ENCODE measurements at regions of chr5 and their contacts with region 1.

Region 1: GRCh38 chr5:522899-523440 is 1.3 kb downstream of the SLC9A3 start:
- DNase-seq: no peak
- H3K4me3 ChIP-seq: no peak overlapping the region
- H3K27ac ChIP-seq: no peak overlapping the region
- H3K4me1 ChIP-seq: no peaks in the 10 kb centered on the region
- H3K27me3 ChIP-seq: peaks cover 91% of the 10 kb centered on the region
- CTCF ChIP-seq: no peak

Region 2: DNA sequence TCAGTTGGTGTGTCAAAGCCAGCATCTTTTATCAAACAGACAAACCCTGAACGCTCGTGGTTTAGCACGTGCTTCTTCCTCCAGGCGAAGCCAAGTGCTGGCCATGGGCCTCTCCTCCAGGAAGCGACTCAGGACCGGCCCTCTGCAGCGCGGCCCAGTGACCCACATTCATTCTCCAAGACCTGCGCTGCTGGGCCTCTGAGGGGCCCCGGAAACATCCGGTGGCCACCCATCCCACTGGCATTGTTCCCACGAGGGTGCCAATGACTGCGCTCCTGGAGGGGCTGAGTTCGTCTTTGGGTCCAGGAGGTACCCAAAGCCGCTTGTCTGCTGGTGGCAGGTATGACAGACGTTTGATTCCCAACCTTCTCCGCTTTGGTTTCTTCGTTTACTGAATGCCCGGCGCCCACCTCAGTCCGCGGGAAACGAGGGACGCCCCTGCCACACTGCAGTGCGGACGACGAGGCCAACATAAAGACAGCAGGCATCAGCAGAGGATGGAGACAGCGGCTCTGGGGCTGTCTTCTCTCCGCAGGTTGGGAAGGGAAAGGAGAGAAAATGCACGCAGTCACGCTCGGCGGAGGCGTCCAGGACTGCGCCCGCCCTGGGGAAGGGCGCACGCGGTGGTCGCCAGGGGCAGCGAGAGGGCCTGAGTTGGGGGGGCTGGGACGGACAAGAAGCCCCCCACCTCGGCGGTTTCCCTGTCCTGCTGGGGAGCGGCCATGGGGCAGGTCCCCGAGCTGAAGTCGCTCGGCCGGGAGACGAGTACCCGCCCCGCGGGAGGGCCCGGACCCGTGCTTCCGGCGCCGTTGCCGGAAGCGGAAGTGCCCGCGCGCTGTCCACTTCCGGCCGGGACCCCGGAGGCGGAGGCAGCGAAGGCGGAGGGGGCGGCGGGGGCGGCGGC is 80.4 kb before region 1 on chr5 and contains the start of gene EXOC3:
- CTCF ChIA-PET with region 1: interaction called, 13 read pairs
- POLR2A ChIA-PET with region 1: no interaction called
- intact Hi-C with region 1: no loop called
- DNase-seq: peak; percentile 71 to 92
- H3K4me3 ChIP-seq: peak within 1 kb of the TSS; percentile 99
- H3K27ac ChIP-seq: peak within 1 kb of the TSS; percentile 25
- H3K4me1 ChIP-seq: peaks cover 24% of the 10 kb centered on the region
- H3K27me3 ChIP-seq: no peaks in the 10 kb centered on the region
- CTCF ChIP-seq: no peak
- total RNA-seq, gene EXOC3: 155 and 188 TPM in 2 replicates

Region 3: DNA sequence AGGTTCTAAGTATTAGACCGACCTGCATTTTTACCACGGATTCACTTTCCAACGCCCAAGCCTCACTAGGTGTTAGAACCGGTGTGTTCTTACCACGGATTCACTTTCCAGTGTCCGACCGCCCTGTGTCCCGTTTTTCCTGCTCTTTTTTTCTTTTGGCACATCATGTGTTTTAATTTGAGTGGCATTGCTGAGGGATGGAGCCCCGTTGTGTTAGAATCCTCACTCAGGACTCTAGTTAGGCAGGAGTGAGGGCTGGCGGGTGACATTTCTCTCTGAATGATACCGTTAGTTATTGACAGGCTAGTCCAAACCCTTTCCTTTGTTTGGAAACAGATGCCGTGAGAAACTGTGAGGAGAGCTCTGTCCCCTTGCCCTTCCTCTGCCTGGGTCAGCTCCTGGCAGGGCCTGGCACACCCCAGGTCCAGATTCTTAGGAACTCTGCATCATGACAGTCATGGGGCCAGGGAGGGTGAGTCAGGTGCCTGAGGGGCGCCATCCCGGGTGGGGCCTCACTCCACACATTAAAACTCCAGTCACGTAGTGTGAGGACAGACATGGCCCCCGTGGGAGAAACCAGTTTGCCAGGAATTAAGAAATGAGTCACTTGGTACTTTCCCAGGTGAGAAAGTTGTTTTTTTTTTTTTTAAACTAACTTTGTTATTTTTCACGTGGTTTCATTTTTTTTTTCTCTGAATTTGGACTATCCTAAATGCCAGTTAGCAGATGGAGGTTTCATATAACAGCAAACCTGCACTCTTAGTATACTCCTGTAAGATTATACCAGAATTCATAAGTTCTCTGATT is 64.2 kb before region 1 on chr5:
- CTCF ChIA-PET with region 1: no interaction called
- POLR2A ChIA-PET with region 1: no interaction called
- intact Hi-C with region 1: no loop called
- DNase-seq: peak; percentile 99
- H3K4me3 ChIP-seq: no peak overlapping the region; the same call in 1 of the 2 replicates
- H3K27ac ChIP-seq: peak overlapping the region; percentile 79
- H3K4me1 ChIP-seq: peaks cover 23% of the 10 kb centered on the region
- H3K27me3 ChIP-seq: no peaks in the 10 kb centered on the region
- CTCF ChIP-seq: 0 out of 2 replicates have a peak, but pooled peaks have one; percentile 14

Region 4: DNA sequence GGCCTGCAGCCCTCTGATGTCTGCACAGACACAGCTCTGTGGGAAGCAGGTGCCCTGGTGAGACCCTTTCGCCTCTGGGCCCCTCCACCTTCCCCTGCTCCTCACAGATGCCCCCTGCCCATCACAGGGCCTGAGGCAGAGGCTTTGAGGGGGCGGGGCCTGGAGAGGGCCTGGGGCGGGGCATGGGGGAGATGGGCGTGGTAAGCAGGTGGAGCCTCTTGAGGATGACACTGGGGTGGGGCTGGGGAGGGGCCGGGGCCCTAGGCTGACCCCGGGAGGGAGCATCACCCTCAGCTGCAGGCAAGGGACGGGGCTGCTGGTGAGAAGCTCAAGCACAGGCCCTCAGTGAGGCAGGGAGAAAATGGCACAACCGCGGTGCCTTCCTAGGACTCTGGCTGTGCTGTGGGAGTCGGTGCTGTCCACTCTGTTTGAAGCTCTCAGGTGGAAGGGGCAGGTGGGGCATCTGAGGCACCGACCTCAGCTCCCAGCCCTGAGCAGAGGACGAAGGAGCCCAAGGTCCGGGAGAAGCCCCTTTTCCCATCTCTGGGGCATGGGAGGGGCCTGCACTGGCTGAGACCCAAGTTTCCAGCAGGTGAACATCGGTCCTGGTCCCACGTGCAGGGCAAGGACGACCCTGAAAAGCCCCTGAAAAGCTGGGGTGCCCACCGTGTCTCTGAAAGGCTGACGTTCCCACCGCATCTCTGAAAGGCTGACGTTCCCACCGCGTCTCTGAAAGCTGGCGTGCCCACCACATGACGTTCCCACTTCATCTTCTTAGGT is 18.8 kb after region 1 on chr5:
- CTCF ChIA-PET with region 1: interaction called, 13 read pairs
- POLR2A ChIA-PET with region 1: no interaction called
- intact Hi-C with region 1: no loop called
- DNase-seq: no peak
- H3K4me3 ChIP-seq: no peak overlapping the region
- H3K27ac ChIP-seq: no peak overlapping the region
- H3K4me1 ChIP-seq: no peaks in the 10 kb centered on the region
- H3K27me3 ChIP-seq: peaks cover 96% of the 10 kb centered on the region
- CTCF ChIP-seq: no peak

Region 5: DNA sequence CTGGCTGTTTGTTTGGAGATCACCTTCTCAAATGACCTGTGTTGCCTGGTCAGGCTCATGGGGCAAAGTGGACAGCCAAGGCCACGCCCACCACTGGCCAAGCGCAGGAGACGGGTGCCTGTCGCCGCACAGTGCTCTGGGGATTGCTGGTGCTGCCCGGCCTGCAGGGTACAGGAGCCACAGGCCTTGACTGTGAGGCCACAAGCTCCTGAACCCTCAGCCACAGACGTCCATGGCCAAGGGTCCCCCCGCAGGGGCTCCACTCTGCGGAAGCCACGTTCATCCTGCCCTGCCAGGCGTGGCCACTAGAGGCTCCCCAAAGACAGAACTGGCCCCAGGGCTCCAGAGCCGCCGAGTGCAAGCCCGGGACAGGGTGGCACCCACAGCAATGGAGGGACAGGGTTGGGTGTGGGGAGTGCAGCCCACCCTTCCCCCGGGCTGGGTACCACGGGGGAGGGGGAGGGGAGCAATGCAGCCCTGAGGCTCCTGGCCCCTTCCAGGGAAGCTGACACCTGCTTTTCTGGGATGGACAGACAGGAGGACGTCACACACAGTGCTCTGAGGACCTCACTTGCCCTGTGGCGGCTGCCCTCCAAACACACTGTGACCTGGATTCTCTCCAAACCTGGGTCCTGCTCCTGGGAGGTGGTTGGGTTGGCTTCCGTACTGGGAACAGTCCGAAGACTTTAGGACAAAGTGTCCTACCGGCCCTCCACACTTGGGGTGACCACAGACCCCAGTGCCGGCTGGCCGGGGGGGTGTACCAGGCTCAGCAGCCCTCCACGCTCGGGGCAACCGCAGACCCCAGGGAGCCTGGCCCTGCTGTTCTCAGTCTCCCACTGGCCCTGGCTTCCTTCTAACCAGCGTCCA is 148.7 kb after region 1 on chr5:
- CTCF ChIA-PET with region 1: no interaction called
- POLR2A ChIA-PET with region 1: no interaction called
- intact Hi-C with region 1: no loop called
- DNase-seq: peak; percentile 52 to 94
- H3K4me3 ChIP-seq: peak overlapping the region; percentile 34; the same call in 1 of the 2 replicates
- H3K27ac ChIP-seq: no peak overlapping the region
- H3K4me1 ChIP-seq: peaks cover 27% of the 10 kb centered on the region
- H3K27me3 ChIP-seq: no peaks in the 10 kb centered on the region
- CTCF ChIP-seq: peak; percentile 100